ENCODE measurements at regions of chr16 and their contacts with region 1.

Region 1: DNA sequence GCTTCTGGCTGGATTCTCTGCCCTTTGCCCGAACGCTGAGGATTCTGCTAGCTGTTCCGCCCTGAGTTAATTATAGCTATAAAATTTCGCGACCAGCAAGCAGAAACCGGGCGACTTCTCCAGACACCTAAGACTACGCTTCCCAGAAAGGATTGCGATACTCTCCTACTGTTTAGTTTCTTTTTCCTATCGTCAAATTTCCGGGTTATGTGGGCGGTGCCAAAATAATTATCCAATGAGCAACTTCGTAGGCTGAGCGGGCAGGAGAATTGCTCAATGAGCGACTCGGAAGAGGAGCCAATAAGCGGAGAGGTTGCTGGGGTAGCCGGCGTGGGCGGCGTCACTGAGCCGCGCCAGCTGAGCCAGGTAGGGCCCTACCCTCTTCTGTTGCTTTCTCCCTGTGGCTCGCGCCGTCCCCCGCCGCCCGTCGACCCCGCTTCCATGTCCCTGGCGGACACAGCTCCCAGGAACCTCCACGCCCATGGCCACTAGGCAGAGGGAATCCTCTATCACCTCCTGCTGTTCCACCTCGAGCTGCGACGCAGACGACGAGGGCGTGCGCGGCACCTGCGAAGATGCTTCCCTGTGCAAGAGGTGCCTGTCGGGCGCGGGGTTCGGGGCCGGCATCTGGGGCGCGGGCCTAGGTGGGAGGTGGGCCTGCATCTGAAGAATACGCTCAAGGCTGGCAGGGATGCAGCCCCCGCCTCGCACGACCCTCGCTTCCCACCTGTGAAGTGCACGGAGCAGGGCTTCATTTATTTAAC is at the start of gene LCMT1:
- DNase-seq: peak; percentile 90 to 95 (median 94)
- ATAC-seq: peak; percentile 92 to 94
- H3K4me3 ChIP-seq: peak within 1 kb of the TSS; percentile 74
- H3K27ac ChIP-seq: peak within 1 kb of the TSS; percentile 85
- H3K4me1 ChIP-seq: peaks cover 2% of the 10 kb centered on the region
- H3K27me3 ChIP-seq: no peaks in the 10 kb centered on the region
- total RNA-seq, gene LCMT1: 34.2 to 41.6 (median 35.5) TPM

Region 2: DNA sequence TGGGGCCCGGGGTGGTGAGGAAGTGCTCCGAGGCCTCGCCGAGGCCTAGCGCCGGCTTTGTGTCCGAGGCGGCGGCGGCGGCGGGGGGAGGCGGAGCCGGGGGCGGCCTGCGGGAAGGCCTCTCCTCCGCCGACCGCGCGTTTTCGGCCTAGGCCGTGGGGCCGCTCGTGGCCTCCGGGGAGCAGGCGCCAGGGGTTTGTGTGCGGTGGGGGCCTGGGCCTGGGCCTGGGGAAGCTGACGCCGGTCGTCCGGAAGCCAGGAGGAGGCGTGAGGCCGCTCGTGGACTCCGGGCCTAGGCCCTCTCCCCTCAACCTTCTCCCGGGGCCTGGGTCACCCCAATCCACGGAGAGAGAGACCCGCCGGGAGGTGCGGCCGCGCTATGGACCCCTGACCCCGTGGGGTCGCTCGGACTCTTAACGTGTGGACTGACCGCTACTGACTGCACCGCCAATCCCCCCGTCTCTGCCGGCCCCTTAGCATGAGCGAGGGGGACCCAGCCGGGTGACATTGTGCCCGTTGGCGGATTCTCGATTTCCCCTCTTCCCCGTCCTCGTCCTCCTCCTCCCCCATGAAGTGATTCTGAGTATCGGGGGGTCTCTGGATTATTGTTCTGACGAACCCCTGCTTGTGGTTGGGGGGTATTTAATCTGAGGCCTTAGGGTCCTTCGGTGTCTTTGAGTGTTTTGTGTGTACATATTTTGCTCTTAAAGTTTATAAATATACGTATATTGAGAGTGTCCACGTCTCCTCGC is 571.6 kb before region 1 on chr16:
- intact Hi-C with region 1: loop called in 1 of 4 experiments (anchors 10 kb)
- DNase-seq: peak; percentile 70 to 88 (median 86)
- ATAC-seq: peak; percentile 69 to 73
- H3K4me3 ChIP-seq: peak overlapping the region; percentile 89
- H3K27ac ChIP-seq: peak overlapping the region; percentile 99
- H3K4me1 ChIP-seq: no peaks in the 10 kb centered on the region
- H3K27me3 ChIP-seq: no peaks in the 10 kb centered on the region

Region 3: DNA sequence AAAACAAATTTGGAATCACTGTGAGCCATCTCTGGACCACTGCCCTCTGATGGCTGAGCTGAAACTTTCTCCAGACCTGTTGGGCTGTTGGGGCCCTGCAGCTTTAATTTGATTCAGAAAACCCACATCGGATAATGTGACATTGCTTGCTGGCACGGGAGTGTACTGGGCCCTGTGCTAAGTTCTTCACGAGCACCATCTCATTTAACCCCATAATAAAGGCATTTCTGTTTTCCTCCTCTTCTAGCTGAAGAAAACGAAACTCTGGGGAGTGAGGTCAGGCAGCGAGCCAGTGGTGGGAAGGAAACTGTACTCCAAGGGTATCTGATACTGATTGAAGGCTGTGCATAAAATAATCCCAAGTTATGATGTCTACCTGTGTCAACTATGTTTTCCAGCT is 416.7 kb before region 1 on chr16:
- intact Hi-C with region 1: no loop called
- DNase-seq: no peak
- ATAC-seq: peak in 1 of 2 donors; percentile 40
- H3K4me3 ChIP-seq: no peak overlapping the region
- H3K27ac ChIP-seq: no peak overlapping the region
- H3K4me1 ChIP-seq: peaks cover 2% of the 10 kb centered on the region
- H3K27me3 ChIP-seq: no peaks in the 10 kb centered on the region

Region 4: GRCh38 chr16:25066747-25067631 is 44.6 kb before region 1 on chr16:
- intact Hi-C with region 1: loop called in 2 of 4 experiments (anchors 5 to 10 kb)
- DNase-seq: peak; percentile 86 to 95 (median 93)
- ATAC-seq: peak; percentile 97 to 98
- H3K4me3 ChIP-seq: peak overlapping the region; percentile 63
- H3K27ac ChIP-seq: peak overlapping the region; percentile 82
- H3K4me1 ChIP-seq: peaks cover 2% of the 10 kb centered on the region
- H3K27me3 ChIP-seq: no peaks in the 10 kb centered on the region